Astrocyte of the cerebellum (primary cell): ENCODE measurements at regions of chr15 and their contacts with region 1.

Region 1: DNA sequence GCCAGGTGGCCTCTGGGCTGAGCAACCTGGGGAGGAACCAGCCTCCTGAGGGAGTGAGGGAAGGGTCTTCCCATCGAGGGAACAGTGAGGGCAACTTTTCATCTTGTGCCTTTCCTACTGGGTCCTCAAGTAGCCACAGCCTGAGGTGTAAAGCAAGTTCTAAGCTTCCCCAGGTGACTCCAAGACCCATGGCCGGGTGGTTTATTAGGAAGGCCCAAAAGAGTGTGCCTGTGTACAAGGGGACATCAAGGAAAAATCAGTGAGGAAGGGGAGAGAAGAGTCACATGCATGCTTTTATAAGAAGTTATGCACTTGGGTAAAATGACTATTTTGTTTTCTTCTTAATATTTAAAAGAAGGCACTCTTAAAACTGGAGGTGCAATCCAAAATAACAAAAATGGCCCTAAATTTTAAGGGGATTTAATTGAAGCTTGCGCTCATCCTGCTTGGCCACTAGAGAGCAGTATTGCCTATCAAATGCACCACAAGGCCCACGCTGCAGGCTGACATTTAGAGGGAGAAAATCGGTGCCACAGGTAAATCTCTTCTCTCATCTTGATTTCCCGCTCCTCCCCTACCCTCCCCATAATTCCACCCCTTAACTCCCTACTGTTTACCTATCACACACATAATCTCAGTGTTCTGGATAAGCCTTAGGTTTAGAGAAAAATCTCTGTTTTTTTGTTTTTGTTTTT is 6.7 kb downstream of the NANOGP8 start:
- DNase-seq: peak; percentile 37
- H3K4me3 ChIP-seq: no peak overlapping the region
- CTCF ChIP-seq: peak; percentile 73

Region 2: DNA sequence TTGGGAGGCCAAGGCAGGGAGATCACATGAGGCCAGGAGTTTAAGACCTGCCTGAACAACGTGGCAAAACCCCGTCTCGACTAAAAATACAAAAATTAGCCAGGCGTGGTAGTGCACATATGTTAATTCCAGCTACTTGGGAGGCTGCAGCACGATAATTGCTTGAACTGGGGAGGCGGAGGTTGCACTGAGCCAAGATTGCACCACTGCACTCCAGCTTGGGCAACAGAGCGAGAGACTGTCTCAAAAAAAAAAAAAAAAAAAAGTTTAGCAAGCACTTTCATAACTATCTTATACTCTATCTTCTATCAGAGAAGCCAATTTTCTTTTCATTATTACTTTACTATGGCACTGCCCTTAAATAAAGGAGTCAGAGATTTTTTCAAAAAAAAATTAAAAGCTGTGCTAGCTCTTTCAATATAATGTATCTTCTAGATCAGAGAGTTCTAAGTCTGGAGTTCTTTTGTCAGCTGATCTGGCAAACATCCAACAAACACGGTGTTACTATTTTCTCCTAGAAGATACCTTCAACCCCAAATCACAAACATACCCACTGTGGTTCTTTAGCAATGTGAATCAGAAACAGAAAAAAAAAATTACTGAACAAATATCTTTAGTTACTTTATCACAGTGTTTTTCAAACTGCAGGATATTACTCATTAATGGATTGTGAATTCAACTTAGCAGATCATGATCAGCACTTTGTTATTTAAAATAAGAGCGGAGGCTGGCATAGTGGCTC is 93.3 kb before region 1 on chr15:
- in situ Hi-C with region 1: no loop called
- DNase-seq: no peak
- H3K4me3 ChIP-seq: no peak overlapping the region
- CTCF ChIP-seq: no peak

Region 3: GRCh38 chr15:35399901-35400300 is 321.5 kb after region 1 on chr15:
- in situ Hi-C with region 1: loop called (anchors 25 kb)
- DNase-seq: no peak
- H3K4me3 ChIP-seq: no peak overlapping the region
- CTCF ChIP-seq: no peak